Uterus (tissue), 4 donors: ENCODE measurements at regions of chr5 and their contacts with region 1.

Region 1: DNA sequence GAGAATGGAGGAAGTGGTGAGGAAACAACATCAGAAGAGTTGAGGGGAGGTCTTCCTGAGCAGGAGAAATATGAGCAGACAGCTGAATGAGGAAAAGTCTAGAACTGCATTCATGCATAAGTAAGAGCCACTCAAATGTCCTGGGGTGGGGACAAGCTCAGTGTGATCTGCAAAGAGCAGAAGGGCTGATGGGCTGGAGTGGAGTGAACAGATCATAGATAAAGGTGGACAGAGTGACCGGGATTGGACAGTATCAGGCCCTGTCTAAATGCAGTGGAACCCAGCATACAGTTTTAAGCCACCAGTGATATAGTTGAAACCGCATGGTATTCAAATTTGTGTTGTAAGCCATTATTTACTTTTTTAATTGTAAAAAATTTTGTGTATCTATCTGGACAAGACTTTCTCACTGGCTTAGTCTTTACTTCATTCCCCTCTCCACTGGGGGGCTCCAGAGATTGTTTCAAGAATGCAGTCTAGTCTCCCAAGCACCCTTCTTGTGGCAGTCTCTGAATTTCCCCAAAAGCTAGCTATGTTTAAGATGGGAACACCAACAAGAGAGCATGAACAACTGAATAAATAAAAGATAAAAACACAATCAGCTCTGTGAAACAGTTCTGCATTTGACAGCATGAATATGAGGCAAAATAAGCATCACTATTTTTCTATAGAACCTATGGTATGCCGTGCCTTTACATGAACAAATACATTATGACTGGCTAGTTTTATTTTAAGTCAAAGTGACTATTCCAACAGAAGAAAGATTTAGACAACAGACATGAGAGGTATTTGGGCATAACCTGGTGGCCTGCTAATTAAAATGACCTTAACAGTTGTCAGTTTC is 10.7 kb upstream of the STK32A start:
- DNase-seq: peak in 1 of 2 donors; percentile 49
- H3K4me3 ChIP-seq: no peak overlapping the region
- H3K27ac ChIP-seq: no peak overlapping the region
- H3K4me1 ChIP-seq: no peaks in the 10 kb centered on the region
- H3K27me3 ChIP-seq: no peaks in the 10 kb centered on the region
- CTCF ChIP-seq: peak; percentile 60 to 71 (median 64)
- POLR2A ChIP-seq: no peak

Region 2: DNA sequence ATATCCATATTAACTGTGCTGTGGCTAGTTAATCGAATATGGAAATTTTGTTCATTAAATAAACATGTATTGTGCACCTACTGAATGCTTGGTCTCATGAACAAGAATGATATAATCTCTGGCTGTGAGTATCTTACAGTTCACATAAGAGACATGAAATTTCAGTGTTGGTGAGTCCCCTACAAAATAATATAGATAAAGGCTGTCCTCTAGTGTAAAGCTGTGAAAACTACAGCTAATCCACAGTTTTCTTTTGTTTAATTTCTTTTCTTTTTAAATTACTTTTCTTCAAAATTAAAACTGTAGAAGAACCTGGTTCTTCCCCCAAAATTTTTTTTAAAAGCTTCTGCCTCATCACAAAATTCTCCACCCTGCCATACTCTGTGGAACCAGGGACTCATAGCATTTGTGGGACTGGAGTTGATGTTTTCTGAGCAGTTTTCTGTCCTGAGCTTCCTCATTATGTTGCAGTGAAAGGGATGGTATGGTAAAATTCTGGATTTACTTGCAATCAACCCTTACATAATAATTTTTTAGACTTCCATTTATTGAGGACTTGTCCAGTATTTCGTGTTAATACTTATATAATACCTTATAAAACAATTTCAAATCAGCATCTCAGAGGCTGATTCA is 145.7 kb after region 1 on chr5:
- intact Hi-C with region 1: loop called (anchors 10 kb)
- DNase-seq: no peak
- H3K4me3 ChIP-seq: no peak overlapping the region
- H3K27ac ChIP-seq: no peak overlapping the region
- H3K4me1 ChIP-seq: no peaks in the 10 kb centered on the region
- H3K27me3 ChIP-seq: no peaks in the 10 kb centered on the region
- CTCF ChIP-seq: peak; percentile 21 to 41 (median 22)
- POLR2A ChIP-seq: no peak

Region 3: DNA sequence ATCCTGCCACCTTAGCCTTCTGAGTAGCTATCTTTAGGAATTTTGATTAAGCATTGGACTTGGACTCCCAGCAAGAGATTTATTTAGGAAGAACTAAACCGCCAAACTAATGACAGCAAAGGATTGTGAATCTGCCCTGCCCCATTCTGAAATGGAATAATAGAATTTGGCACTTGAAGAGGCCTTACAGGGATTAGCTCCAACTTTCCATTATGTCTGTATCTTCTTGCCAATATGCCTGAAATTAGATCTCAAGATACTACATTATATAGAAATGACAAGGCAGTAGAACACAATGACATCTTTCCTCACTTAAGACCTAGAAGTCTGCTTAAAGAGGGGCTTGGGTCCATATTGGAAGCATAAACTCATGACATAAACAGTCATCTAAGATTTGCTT is 362.7 kb after region 1 on chr5:
- intact Hi-C with region 1: loop called (anchors 10 kb)
- DNase-seq: no peak
- H3K4me3 ChIP-seq: no peak overlapping the region
- H3K27ac ChIP-seq: no peak overlapping the region
- H3K4me1 ChIP-seq: no peaks in the 10 kb centered on the region
- H3K27me3 ChIP-seq: no peaks in the 10 kb centered on the region
- CTCF ChIP-seq: no peak
- POLR2A ChIP-seq: no peak